Dorsolateral prefrontal cortex (tissue), 120 donors: ENCODE measurements at regions of chr11 and their contacts with region 1.

Region 1: DNA sequence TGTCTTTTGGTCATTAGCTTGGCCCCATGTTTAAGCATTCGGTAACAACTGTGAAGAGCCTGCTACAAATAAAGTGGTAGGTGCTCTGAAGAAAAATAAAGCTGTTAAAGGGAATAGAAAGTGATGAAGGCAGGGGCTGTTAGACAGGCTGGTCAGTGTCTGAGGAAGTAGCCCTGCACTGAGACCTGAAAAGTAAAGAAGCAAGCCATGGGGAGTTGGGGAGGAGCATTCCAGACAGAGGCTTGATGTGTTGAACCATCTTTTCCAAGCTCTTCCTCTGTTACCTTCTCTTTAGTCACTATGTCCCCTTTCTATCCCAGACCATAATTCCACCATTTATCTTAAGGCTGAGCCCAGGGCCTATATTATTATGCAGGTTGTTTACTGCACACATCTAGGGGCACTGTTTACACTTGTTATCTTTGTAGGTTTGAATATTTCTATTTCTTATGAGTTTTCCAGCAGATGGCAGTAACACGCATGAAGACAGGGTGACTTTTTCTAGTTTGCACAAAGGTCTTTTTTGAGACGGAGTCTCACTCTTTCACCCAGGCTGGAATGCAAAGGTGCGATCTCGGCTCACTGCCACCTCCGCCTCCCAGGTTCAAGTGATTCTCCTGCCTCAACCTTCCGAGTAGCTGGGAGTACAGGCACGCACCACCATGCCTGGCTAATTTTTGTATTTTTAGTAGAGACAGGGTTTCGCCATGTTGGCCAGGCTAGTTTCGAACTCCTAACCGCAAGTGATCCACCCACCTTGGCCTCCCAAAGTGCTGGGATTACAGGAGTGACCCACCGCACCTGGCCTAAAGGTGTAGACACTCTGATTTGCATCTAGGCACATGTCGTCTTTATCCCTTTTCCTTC is 23.0 kb downstream of the ZFTA start:
- DNase-seq: no peak
- H3K4me3 ChIP-seq: no peak overlapping the region
- H3K27ac ChIP-seq: peak overlapping the region in 15 of 59 donors; percentile 2 to 58 (median 29)
- H3K27me3 ChIP-seq: no peaks in the 10 kb centered on the region
- CTCF ChIP-seq: peak in 48 of 56 donors; percentile 7 to 59 (median 36)

Region 2: DNA sequence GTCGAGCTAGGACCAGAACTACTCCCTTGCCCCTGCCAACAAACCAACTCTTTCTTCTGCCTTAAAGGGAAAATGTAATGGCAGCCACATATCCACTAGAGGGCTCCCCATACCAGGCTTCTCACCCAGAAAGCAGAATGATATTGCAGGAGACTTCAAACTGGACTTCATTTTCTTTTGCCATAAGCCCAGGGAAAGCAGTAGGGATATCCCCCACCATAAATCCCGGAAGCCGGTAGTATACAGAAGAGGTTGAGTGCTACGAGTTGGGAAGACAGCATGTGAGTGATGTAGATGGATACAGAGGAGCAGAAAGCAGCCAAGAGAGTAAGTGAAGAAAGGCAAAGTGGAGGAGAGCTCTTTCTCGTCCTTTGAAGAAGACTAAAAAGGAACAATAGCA is 266.6 kb before region 1 on chr11:
- intact Hi-C with region 1: loop called (anchors 10 kb)
- DNase-seq: peak in 7 of 10 donors; percentile 24 to 77 (median 49)
- H3K4me3 ChIP-seq: peak overlapping the region in 13 of 59 donors; percentile 7 to 37 (median 20)
- H3K27ac ChIP-seq: peak overlapping the region in 52 of 59 donors; percentile 1 to 88 (median 66)
- H3K27me3 ChIP-seq: no peaks in the 10 kb centered on the region
- CTCF ChIP-seq: peak; percentile 79 to 99 (median 94)

Region 3: GRCh38 chr11:63490551-63491239 is 254.8 kb before region 1 on chr11 and contains the start of gene PLAAT5:
- intact Hi-C with region 1: loop called in 1 of 2 experiments (anchors 10 kb)
- DNase-seq: peak in 4 of 10 donors; percentile 31 to 66 (median 48)
- H3K4me3 ChIP-seq: peak within 1 kb of the TSS; percentile 47 to 78 (median 67)
- H3K27ac ChIP-seq: peak within 1 kb of the TSS; percentile 13 to 94 (median 87)
- H3K27me3 ChIP-seq: no peaks in the 10 kb centered on the region
- CTCF ChIP-seq: peak in 9 of 56 donors; percentile 9 to 39 (median 15)
- total RNA-seq, gene PLAAT5: 1.7 to 13.3 (median 6.4) TPM